Heart left ventricle (tissue), 16 donors: ENCODE measurements at regions of chr12 and their contacts with region 1.

Region 1: DNA sequence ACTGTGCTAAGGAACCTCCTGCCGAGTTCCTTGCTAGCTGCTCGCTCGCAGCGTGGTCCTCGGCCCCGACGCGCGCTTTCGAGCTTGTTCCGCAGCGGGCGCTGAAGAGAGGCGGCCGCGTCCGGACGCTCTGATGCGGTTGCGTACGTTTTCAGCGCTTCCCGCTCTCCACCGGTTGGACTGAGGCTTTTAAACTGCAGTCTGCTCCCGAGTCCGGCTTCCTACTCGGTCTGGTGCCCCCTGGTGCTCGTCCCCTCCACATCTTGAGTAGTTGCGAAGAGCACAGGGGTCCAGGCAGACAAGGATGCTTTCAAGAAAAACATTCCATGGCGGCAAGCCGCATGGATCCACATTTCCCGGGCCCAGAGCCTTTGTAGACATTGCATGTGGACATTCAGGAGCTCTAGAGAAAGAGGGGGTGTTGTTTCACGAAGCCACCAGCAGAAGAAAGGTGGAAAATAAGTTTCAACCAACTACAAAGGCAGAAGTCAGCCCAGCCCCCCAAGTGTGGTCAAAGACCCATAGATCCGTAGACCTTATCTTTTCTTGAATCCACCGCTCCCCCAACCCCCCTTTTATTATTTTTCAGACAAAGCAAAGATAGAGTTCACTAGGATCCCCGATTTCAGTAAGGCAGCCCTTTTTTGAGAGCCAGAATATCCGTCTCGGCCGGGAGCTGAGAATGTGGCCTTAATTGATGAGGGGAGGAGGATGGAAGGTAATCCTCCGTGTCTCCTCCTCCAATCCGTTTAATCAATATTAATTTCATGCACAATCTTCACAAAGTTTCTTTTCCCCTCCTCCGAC is 984 bp upstream of the WNK1 start:
- DNase-seq: peak; percentile 93 to 96 (median 95)
- ATAC-seq: peak; percentile 67 to 79 (median 70)
- H3K4me3 ChIP-seq: peak overlapping the region; percentile 15 to 97 (median 84)
- H3K27ac ChIP-seq: peak overlapping the region; percentile 39 to 99 (median 98)
- H3K4me1 ChIP-seq: peaks cover 0 to 48% (median 23%) of the 10 kb centered on the region in 12 donors
- H3K27me3 ChIP-seq: no peaks in the 10 kb centered on the region
- CTCF ChIP-seq: peak; percentile 62 to 92 (median 78)
- POLR2A ChIP-seq: peak in 1 of 2 donors; percentile 69

Region 2: GRCh38 chr12:569803-570434 is 181.5 kb before region 1 on chr12:
- intact Hi-C with region 1: loop called in 9 of 10 experiments (anchors 1 to 5 kb)
- DNase-seq: peak; percentile 86 to 94 (median 90)
- ATAC-seq: peak; percentile 57 to 77 (median 69)
- H3K4me3 ChIP-seq: peak overlapping the region; percentile 44 to 74 (median 65)
- H3K27ac ChIP-seq: peak overlapping the region; percentile 91 to 99 (median 95)
- H3K4me1 ChIP-seq: peaks cover 5 to 41% (median 34%) of the 10 kb centered on the region in 12 donors
- H3K27me3 ChIP-seq: no peaks in the 10 kb centered on the region
- CTCF ChIP-seq: peak; percentile 90 to 98 (median 96)
- POLR2A ChIP-seq: no peak

Region 3: GRCh38 chr12:642633-643474 is 108.5 kb before region 1 on chr12:
- intact Hi-C with region 1: loop called in 8 of 10 experiments (anchors 2 to 10 kb)
- DNase-seq: peak; percentile 83 to 93 (median 88)
- ATAC-seq: peak; percentile 9 to 78 (median 66)
- H3K4me3 ChIP-seq: peak overlapping the region; percentile 43 to 86 (median 74)
- H3K27ac ChIP-seq: peak overlapping the region; percentile 93 to 100 (median 99)
- H3K4me1 ChIP-seq: peaks cover 7 to 91% (median 54%) of the 10 kb centered on the region in 12 donors
- H3K27me3 ChIP-seq: no peaks in the 10 kb centered on the region
- CTCF ChIP-seq: peak in 11 of 12 donors; percentile 9 to 51 (median 34)
- POLR2A ChIP-seq: peak in 1 of 2 donors; percentile 28

Region 4: DNA sequence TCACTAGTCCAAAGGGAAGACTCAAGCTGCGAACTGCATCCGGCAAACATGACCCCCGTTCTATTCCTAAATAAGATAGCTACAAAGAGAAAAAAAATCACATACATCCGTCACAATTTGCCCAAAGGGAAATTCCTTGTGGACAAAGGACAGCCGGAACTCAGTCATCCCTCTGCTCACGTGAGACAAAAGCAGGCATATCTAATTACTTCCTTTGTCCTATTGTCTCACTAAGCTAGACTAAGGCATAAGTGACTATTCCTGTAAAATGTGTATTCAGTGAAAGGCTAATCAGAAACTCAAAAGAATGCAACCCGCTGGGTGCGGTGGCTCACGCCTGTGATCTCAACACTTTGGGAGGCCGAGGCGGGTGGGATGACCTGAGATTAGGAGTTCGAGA is 60.9 kb before region 1 on chr12:
- intact Hi-C with region 1: no loop called
- DNase-seq: peak in 1 of 5 donors; percentile 42
- ATAC-seq: peak in 3 of 4 donors; percentile 19 to 84 (median 43)
- H3K4me3 ChIP-seq: peak overlapping the region in 2 of 12 donors; percentile 6 to 9
- H3K27ac ChIP-seq: peak overlapping the region in 10 of 12 donors; percentile 31 to 71 (median 46)
- H3K4me1 ChIP-seq: peaks cover 0 to 10% (median 2%) of the 10 kb centered on the region in 12 donors
- H3K27me3 ChIP-seq: no peaks in the 10 kb centered on the region
- CTCF ChIP-seq: no peak
- POLR2A ChIP-seq: no peak

Region 5: DNA sequence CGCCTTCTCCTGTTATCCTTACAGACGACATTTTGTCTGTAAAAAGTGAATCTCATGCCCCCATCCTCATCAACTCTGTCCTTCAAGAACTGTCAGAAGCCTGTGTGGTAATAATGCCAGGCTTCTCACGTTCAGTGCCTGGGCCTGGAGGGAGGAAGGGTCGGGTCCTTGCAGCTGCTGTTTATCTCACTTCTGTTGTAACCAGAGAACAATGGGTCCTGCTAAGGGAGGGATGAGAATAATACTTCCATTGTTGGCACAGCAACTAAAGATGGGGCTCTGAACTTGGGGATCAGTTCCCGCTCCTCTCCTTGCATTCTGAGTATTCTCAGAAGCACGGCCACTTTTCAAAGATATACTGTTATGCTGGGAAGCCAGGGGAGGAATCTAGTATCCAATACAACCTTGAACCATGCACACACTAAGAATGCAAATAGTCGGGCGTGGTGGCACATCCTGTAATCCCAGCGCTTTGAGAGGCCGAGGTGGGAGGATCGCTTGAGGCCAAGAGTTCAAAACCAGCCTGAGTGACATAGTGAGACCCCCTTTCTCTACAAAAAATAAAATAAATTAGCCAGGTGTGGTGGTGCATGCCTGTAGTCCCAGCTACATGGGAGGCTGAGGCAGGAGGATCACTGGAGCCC is 49.4 kb before region 1 on chr12:
- intact Hi-C with region 1: loop called in 1 of 10 experiments (anchors 5 kb)
- DNase-seq: no peak
- ATAC-seq: no peak
- H3K4me3 ChIP-seq: no peak overlapping the region
- H3K27ac ChIP-seq: no peak overlapping the region
- H3K4me1 ChIP-seq: peaks cover 0 to 22% (median 3%) of the 10 kb centered on the region in 12 donors
- H3K27me3 ChIP-seq: no peaks in the 10 kb centered on the region
- CTCF ChIP-seq: no peak
- POLR2A ChIP-seq: no peak

Region 6: GRCh38 chr12:802242-803120 is 51.1 kb after region 1 on chr12:
- intact Hi-C with region 1: loop called in 2 of 10 experiments (anchors 2 to 5 kb)
- DNase-seq: no peak
- ATAC-seq: no peak
- H3K4me3 ChIP-seq: no peak overlapping the region
- H3K27ac ChIP-seq: peak overlapping the region in 2 of 12 donors; percentile 1 to 28
- H3K4me1 ChIP-seq: peaks cover 4 to 92% (median 38%) of the 10 kb centered on the region in 12 donors
- H3K27me3 ChIP-seq: no peaks in the 10 kb centered on the region
- CTCF ChIP-seq: no peak
- POLR2A ChIP-seq: no peak

Region 7: GRCh38 chr12:949453-950191 is 198.2 kb after region 1 on chr12 and contains the start of gene RAD52:
- intact Hi-C with region 1: loop called in 2 of 10 experiments (anchors 5 kb)
- DNase-seq: peak; percentile 98 to 99 (median 98)
- ATAC-seq: peak; percentile 97 to 98 (median 97)
- H3K4me3 ChIP-seq: peak within 1 kb of the TSS; percentile 68 to 94 (median 82)
- H3K27ac ChIP-seq: peak within 1 kb of the TSS; percentile 76 to 98 (median 92)
- H3K4me1 ChIP-seq: peaks cover 0 to 22% (median 12%) of the 10 kb centered on the region in 12 donors
- H3K27me3 ChIP-seq: no peaks in the 10 kb centered on the region
- CTCF ChIP-seq: peak; percentile 95 to 100 (median 99)
- POLR2A ChIP-seq: peak in 1 of 2 donors; percentile 48
- total RNA-seq, gene RAD52: 4.1 to 9.7 (median 6.2) TPM

Region 8: DNA sequence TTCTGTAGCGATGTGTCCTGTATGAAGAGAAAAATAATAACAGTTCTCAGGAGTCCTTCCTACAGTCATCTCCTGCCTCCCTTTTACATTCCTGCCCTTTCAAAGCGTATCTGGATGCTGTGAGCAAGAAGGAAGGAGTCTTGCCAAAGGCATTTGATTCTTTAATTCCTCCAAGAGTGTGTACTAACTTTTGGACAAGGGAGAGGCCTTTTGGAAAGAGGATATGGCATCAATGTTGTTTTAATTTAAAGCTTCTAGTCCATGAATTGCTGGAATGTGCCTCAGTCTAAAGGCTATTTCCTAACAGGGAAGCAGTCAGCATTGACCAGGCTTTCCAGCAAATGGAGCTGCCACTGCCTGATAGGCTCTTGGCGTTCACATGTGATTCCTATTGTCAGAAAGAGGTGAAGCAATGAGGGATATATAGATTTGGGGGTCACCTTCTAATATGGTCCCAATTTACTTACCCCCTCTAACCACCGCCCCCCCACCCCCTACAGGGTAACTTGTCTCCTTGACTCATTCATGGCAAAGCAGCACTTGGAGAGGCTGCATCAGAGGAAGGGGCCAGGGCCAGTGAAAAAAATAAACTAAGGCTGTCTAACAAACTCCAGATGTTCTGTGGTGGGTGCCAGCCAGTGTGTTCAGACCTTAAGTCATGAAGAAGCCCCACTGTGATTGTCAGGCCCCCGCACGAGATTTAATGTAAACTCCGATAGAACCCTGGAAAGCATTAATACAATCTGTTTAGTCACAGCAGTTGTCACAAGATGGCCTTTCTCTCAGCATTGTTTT is 622.7 kb after region 1 on chr12:
- intact Hi-C with region 1: no loop called
- DNase-seq: no peak
- ATAC-seq: no peak
- H3K4me3 ChIP-seq: no peak overlapping the region
- H3K27ac ChIP-seq: peak overlapping the region in 1 of 12 donors; percentile 28
- H3K4me1 ChIP-seq: peaks cover 0 to 13% (median 5%) of the 10 kb centered on the region in 12 donors
- H3K27me3 ChIP-seq: no peaks in the 10 kb centered on the region
- CTCF ChIP-seq: no peak
- POLR2A ChIP-seq: no peak